ENCODE measurements at regions of chr2 and their contacts with region 1.

Region 1: DNA sequence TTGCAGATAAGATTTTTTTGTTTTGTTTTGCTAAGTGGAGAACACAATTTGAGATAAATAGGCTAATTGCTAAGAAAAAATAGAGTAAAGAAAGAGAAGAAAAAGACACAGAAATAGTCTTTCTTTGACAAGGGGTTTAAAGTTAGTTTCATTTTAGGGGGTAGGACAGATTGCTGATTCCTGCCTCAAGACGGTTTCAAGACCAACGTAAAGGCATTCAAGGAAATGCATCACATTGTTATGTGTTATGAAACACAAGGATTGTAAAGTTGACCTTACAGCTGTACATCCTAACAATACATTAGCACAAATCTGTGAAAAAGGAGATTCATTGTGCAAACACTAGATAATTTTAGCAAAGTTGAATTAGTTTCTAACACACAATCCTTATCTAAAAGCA is 22.7 kb upstream of the ETAA1 start:
- DNase-seq: no peak
- H3K4me3 ChIP-seq: no peak overlapping the region
- H3K4me3 Mint-ChIP-seq: no peak overlapping the region
- H3K27ac Mint-ChIP-seq: no peak overlapping the region
- H3K4me1 ChIP-seq: no peaks in the 10 kb centered on the region
- H3K4me1 Mint-ChIP-seq: no peaks in the 10 kb centered on the region
- H3K27me3 ChIP-seq: no peaks in the 10 kb centered on the region
- H3K27me3 Mint-ChIP-seq: peaks cover 6% of the 10 kb centered on the region
- CTCF ChIP-seq: no peak

Region 2: GRCh38 chr2:67340133-67341011 is 34.1 kb before region 1 on chr2:
- CTCF ChIA-PET with region 1: no interaction called
- POLR2A ChIA-PET with region 1: no interaction called
- intact Hi-C with region 1: loop called (anchors 1 kb)
- DNase-seq: no peak
- H3K4me3 ChIP-seq: no peak overlapping the region
- H3K4me3 Mint-ChIP-seq: no peak overlapping the region
- H3K27ac Mint-ChIP-seq: no peak overlapping the region
- H3K4me1 ChIP-seq: no peaks in the 10 kb centered on the region
- H3K4me1 Mint-ChIP-seq: no peaks in the 10 kb centered on the region
- H3K27me3 ChIP-seq: no peaks in the 10 kb centered on the region
- H3K27me3 Mint-ChIP-seq: peaks cover 10% of the 10 kb centered on the region
- CTCF ChIP-seq: no peak

Region 3: GRCh38 chr2:68238955-68239822 is 864.7 kb after region 1 on chr2:
- CTCF ChIA-PET with region 1: no interaction called
- POLR2A ChIA-PET with region 1: no interaction called
- intact Hi-C with region 1: no loop called
- DNase-seq: no peak
- H3K4me3 ChIP-seq: no peak overlapping the region
- H3K4me3 Mint-ChIP-seq: no peak overlapping the region
- H3K27ac Mint-ChIP-seq: no peak overlapping the region
- H3K4me1 ChIP-seq: no peaks in the 10 kb centered on the region
- H3K4me1 Mint-ChIP-seq: peaks cover 17% of the 10 kb centered on the region
- H3K27me3 ChIP-seq: no peaks in the 10 kb centered on the region
- H3K27me3 Mint-ChIP-seq: no peaks in the 10 kb centered on the region
- CTCF ChIP-seq: no peak